Endothelial cell of umbilical vein (primary cell): ENCODE measurements at regions of chr14 and their contacts with region 1.

Region 1: DNA sequence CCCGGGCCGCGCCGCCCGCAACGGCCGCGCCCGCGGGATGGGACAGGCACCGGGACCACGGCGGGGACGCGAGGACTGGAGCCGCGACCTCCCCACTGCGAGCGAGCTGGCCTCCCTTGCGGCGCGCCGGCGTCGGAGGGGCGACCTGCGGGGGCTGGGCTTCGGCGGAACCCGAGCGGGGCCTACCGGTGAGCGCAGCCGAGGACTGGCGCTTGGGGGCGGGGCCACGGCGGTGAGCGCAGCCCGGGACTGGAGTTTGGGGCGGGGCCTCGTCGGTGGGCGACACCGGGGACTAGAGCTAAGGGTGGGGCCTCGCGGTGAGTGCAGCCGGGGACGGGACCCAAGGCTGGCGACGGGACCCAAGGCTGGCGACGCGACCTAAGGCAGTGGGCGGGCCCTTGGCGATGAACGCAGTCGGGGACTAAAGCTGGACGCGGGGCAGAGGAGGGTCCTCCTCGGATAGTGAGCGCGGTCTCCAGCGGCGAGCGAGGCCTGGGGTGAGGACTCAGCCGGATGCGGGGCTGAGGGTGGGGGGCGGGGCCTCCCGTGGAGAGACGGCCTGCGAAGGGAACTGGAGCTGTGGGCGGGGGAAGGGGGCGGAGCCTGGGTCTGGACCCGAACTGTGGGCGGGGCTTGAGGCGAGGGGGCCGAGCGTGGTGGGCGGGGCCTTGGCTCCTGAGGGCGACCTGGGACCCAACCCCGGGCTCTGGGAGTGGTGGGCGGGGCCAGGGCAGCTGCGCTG is at the start of gene BRF1:
- DNase-seq: peak; percentile 95
- H3K4me3 ChIP-seq: peak within 1 kb of the TSS; percentile 25 to 79 (median 54)
- H3K27ac ChIP-seq: peak within 1 kb of the TSS; percentile 62
- H3K4me1 ChIP-seq: peaks cover 9% of the 10 kb centered on the region
- H3K27me3 ChIP-seq: no peaks in the 10 kb centered on the region
- CTCF ChIP-seq: no peak
- POLR2A ChIP-seq: peak; percentile 39
- total RNA-seq, gene BRF1: 37.9 and 47.2 TPM in 2 replicates

Region 2: GRCh38 chr14:104976198-104977007 is 324.6 kb before region 1 on chr14:
- CTCF ChIA-PET with region 1: no interaction called
- POLR2A ChIA-PET with region 1: no interaction called
- dilution Hi-C with region 1: no loop called
- intact Hi-C with region 1: loop called (anchors 5 kb)
- DNase-seq: peak; percentile 74
- H3K4me3 ChIP-seq: no peak overlapping the region
- H3K27ac ChIP-seq: no peak overlapping the region
- H3K4me1 ChIP-seq: peaks cover 39% of the 10 kb centered on the region
- H3K27me3 ChIP-seq: no peaks in the 10 kb centered on the region
- CTCF ChIP-seq: peak; percentile 90 to 98
- POLR2A ChIP-seq: no peak

Region 3: GRCh38 chr14:105248368-105248756 is 52.6 kb before region 1 on chr14 and contains the start of gene BTBD6:
- CTCF ChIA-PET with region 1: interaction called, 5 read pairs
- POLR2A ChIA-PET with region 1: no interaction called
- dilution Hi-C with region 1: no loop called
- intact Hi-C with region 1: loop called (anchors 10 kb)
- DNase-seq: peak; percentile 84
- H3K4me3 ChIP-seq: peak within 1 kb of the TSS; percentile 45 to 80 (median 52)
- H3K27ac ChIP-seq: peak within 1 kb of the TSS; percentile 74
- H3K4me1 ChIP-seq: peaks cover 7% of the 10 kb centered on the region
- H3K27me3 ChIP-seq: no peaks in the 10 kb centered on the region
- CTCF ChIP-seq: no peak
- POLR2A ChIP-seq: peak; percentile 73
- total RNA-seq, gene BTBD6: 57.7 and 63.1 TPM in 2 replicates

Region 4: GRCh38 chr14:105315211-105315721 is 14.3 kb after region 1 on chr14:
- CTCF ChIA-PET with region 1: interaction called, 4 read pairs
- POLR2A ChIA-PET with region 1: interaction called, 3 read pairs
- dilution Hi-C with region 1: no loop called
- intact Hi-C with region 1: loop called (anchors 1 kb)
- DNase-seq: peak; percentile 41
- H3K4me3 ChIP-seq: peak overlapping the region; percentile 3 to 61 (median 49)
- H3K27ac ChIP-seq: no peak overlapping the region
- H3K4me1 ChIP-seq: peaks cover 8% of the 10 kb centered on the region
- H3K27me3 ChIP-seq: no peaks in the 10 kb centered on the region
- CTCF ChIP-seq: no peak
- POLR2A ChIP-seq: no peak